H1 (cell line): ENCODE measurements at regions of chr12 and their contacts with region 1.

Region 1: DNA sequence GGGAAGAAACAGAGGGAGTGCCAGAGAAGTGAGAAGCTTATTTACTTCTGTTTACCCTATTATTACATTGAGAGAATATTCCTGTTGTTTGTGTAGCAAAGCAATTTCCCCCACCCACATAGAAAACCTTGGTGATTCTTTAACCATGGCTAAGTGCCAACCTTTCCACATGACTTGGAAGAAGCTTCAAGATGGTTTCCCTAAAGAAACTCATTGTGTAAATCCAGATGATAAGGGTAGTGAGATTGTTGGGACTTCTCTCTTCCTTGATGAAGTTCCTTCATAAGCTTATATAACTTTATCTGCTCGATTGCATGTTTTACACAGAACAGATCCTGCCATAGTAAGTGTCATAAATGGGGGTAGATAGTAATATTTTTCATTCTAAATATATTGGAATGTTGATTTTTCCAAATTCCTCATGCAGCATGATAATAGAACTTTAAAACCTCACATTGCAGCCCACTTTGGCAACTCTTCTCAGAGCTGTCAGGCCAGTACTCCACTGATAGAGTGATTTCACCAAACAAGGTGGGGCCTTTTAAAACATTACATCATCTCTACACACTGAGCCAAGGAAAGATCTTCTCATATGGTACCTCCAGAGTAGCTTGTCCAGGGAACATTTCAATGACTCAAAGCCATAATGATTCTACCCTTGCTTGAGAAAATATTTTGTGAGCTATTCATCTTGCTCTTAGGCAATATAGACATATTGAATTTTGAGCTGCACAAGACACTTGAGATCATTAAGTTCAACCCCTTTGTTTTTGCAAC is 47.8 kb upstream of the KIF21A start:
- DNase-seq: no peak
- H3K4me3 ChIP-seq: no peak overlapping the region
- H3K27ac ChIP-seq: no peak overlapping the region
- H3K4me1 ChIP-seq: no peaks in the 10 kb centered on the region
- H3K27me3 ChIP-seq: no peaks in the 10 kb centered on the region
- CTCF ChIP-seq: no peak
- EP300 ChIP-seq: no peak
- POLR2A ChIP-seq: no peak
- RAD21 ChIP-seq: no peak

Region 2: DNA sequence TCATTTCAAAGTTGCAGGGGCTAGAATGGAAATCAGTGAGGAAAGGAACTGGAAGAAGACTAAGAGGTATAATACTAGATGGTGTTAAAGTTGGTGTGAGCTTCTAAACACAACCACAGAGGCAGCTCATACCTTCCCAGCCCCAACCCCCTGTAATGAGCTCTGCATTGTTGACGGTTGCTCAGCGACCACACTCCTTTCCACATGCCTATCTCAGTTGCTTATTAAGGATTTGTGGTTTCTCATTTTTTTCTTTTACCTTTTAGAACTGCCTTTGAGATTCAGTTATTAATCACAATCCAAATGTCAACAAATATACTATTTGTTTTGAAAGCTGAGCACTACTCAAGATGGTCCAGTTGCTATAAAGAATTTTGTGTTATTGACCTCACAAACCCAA is 14.3 kb after region 1 on chr12:
- CTCF ChIA-PET with region 1: interaction called, 10 read pairs
- POLR2A ChIA-PET with region 1: interaction called, 5 read pairs
- DNase-seq: no peak
- H3K4me3 ChIP-seq: no peak overlapping the region
- H3K27ac ChIP-seq: no peak overlapping the region
- H3K4me1 ChIP-seq: peaks cover 0 to 5% (median 2%) of the 10 kb centered on the region in 4 experiments; a peak in 2 of 7 replicates
- H3K27me3 ChIP-seq: no peaks in the 10 kb centered on the region
- CTCF ChIP-seq: no peak
- EP300 ChIP-seq: no peak
- POLR2A ChIP-seq: no peak
- RAD21 ChIP-seq: no peak